ENCODE measurements at regions of chr17 and their contacts with region 1.

Region 1: DNA sequence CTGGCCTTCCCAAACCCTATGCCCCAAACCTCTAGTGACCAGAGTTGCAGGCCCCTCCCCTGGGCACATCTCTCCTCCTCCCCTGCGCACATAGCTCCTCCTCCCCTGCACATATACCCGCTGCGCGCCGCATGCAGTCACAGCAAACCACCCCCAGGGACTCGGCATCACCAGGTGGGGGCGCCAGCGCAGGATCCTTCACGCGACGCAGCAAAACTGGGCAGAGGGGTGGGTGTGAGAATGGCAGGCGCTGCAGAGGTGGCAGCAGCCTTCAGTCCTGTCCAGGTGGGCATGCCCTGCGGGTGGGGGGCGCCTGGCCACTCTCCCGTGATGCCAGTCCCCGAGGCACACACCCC is 5.6 kb downstream of the CORO6 start:
- DNase-seq: peak; percentile 93
- H3K4me3 Mint-ChIP-seq: peak overlapping the region; percentile 82
- H3K27ac Mint-ChIP-seq: peak overlapping the region; percentile 92
- H3K4me1 Mint-ChIP-seq: peaks cover 51% of the 10 kb centered on the region
- H3K27me3 Mint-ChIP-seq: peaks cover 8% of the 10 kb centered on the region

Region 2: DNA sequence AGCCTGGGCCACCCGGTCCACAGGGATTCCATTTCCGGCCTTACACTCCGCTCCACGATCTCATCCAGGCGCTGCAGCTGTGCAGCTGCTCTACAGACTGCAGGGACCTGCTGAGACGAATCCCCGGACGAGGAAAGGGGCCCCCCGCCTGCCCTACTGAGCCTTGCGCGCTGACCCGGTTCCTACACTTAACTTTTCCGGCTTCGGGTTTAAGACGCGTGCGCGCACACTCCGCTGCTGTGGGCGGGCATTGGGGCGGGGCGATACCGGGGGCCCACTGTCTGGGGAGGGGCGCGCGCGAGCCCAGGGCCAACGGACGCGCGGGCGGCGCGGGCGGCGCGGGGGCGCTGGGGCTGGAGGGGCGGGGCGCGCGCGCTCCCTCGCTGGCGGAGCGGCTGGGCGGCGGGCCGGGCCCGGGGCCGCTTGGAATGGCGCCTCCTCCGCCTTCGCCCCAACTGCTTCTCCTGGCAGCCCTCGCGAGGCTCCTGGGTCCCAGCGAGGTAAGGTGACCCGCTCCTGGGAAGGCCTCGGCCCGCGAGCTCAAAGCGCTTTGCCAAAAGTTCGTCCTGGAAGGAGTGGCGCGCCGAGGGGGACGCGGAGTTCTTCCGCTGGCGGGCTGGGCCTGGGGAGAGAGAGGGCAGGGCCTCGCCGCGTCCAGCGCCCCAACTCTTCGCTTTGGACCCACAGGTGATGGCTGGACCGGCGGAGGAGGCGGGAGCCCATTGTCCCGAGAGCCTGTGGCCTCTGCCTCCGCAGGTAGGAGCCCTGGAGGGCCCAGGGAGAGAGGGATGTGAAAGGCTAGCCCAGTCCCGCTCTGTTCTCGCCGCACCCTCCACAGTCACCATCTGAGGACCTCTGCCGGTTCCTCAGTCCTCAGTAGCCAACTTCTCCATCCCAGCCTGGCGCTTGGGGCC is 48.5 kb before region 1 on chr17 and contains the start of gene TP53I13:
- CTCF ChIA-PET with region 1: interaction called, 37 read pairs
- POLR2A ChIA-PET with region 1: interaction called, 3 read pairs
- DNase-seq: peak; percentile 91
- H3K4me3 Mint-ChIP-seq: peak within 1 kb of the TSS; percentile 95
- H3K27ac Mint-ChIP-seq: peak within 1 kb of the TSS; percentile 97
- H3K4me1 Mint-ChIP-seq: peaks cover 33% of the 10 kb centered on the region
- H3K27me3 Mint-ChIP-seq: no peaks in the 10 kb centered on the region
- total RNA-seq, gene TP53I13: 71.4 to 75.0 TPM

Region 3: DNA sequence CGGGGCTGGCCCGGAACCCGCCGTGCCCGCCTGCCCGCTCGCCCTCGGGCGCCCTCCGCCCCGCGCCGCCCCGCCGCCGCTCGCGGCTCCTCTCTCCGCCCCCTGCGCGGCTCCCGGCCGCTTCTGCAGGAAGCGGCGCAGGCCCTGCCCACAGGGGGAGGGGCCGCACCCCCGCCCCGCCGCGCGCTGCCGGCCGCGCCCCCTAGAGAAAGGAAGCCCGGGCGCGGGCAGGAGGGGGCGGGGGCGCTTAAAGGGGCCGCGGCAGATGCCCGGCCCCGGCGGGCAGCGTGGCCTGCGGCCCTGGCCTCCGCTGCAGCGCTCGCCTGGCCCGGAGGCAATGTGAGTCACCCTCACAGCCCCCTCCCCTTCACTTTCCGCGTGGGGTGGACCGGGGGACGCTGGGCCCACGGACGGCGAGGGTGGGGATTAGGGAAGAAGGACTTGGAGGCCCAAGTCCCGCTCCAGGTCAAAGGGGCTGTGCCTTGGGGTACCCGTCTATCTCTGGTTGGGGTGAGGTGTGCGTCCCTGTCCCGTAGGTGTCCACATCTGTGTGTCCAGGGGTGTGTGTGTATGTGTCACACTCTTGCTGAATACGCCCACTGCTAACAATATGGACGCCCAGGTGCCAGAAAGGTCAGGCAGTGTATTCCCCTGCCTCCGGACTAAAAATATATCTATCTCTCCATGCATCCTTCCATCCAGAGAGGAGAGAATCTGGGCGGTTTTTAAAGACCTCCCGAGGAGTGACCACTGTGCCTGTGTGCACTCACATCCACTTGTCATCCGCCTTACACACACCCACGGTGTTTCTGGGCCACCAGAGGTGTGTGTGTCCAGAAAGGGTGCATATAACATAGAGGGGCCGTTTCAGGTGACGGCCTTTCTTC is 27.3 kb before region 1 on chr17 and contains the start of gene GIT1:
- CTCF ChIA-PET with region 1: interaction called, 116 read pairs
- POLR2A ChIA-PET with region 1: interaction called, 5 read pairs
- DNase-seq: peak; percentile 86
- H3K4me3 Mint-ChIP-seq: peak within 1 kb of the TSS; percentile 98
- H3K27ac Mint-ChIP-seq: peak within 1 kb of the TSS; percentile 93
- H3K4me1 Mint-ChIP-seq: peaks cover 73% of the 10 kb centered on the region
- H3K27me3 Mint-ChIP-seq: no peaks in the 10 kb centered on the region
- total RNA-seq, gene GIT1: 107 TPM

Region 4: GRCh38 chr17:29603109-29603674 is 13.9 kb before region 1 on chr17:
- CTCF ChIA-PET with region 1: interaction called, 18 read pairs
- POLR2A ChIA-PET with region 1: no interaction called
- DNase-seq: no peak
- H3K4me3 Mint-ChIP-seq: no peak overlapping the region
- H3K27ac Mint-ChIP-seq: no peak overlapping the region
- H3K4me1 Mint-ChIP-seq: no peaks in the 10 kb centered on the region
- H3K27me3 Mint-ChIP-seq: no peaks in the 10 kb centered on the region

Region 5: DNA sequence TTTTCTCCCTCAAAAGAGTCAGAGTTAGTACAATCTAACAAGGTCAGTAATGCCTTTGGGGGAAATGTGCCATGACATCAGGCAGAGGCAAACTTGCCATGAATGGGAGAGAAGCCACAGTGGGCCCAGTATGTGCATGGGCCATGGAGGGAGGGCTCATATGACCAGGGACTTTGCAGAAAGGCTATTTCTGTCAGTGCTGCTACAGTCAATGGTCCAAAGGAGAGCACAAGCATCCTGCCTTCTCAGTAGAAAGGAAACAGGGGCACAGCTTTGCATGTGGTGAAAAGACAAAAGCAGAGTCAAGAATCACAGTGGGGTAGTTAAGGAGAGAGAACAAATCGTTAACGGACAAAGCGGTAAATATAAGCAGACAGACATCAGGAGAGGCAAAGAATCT is 16.8 kb after region 1 on chr17:
- CTCF ChIA-PET with region 1: interaction called, 33 read pairs
- POLR2A ChIA-PET with region 1: no interaction called
- DNase-seq: no peak
- H3K4me3 Mint-ChIP-seq: no peak overlapping the region
- H3K27ac Mint-ChIP-seq: peak overlapping the region; percentile 7
- H3K4me1 Mint-ChIP-seq: peaks cover 21% of the 10 kb centered on the region
- H3K27me3 Mint-ChIP-seq: no peaks in the 10 kb centered on the region

Region 6: GRCh38 chr17:29760761-29761696 is 143.9 kb after region 1 on chr17:
- CTCF ChIA-PET with region 1: interaction called, 12 read pairs
- POLR2A ChIA-PET with region 1: no interaction called
- DNase-seq: peak; percentile 93
- H3K4me3 Mint-ChIP-seq: peak overlapping the region; percentile 82
- H3K27ac Mint-ChIP-seq: peak overlapping the region; percentile 97
- H3K4me1 Mint-ChIP-seq: peaks cover 38% of the 10 kb centered on the region
- H3K27me3 Mint-ChIP-seq: no peaks in the 10 kb centered on the region

Region 7: DNA sequence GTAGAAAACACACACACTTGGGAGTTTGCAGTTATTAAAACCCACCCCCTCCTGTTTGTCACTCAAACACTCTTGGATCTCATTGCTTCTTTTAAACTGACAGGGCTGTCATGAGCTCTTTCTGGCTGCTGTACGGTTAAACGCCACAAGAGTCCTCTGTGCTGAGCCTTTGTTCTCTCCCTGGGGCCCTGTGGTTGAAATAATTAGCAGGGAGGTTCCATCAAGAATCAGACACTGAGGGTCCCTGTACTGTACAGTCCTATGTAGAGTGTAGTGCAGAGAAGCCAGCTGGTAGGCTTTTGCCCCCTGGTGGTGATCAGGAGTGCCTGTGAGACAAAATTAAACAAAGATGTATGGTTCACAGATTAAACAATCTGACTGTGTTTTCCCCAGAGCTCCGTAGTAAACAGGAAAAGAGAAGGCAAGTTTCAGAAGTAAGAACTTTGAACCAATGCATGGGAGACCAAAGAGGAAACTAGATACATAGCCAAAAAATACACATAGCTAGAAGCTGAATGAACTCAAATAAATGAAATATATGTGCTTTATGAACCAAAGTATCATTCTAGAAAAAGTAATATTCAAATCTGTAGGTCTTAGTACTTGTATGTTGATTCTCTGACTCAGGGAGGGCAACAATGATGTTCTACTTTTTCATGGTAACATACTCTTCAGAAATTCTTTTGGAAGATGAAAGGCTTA is 314.3 kb after region 1 on chr17:
- CTCF ChIA-PET with region 1: interaction called, 23 read pairs
- POLR2A ChIA-PET with region 1: interaction called, 3 read pairs
- DNase-seq: peak; percentile 82
- H3K4me3 Mint-ChIP-seq: no peak overlapping the region
- H3K27ac Mint-ChIP-seq: no peak overlapping the region
- H3K4me1 Mint-ChIP-seq: peaks cover 24% of the 10 kb centered on the region
- H3K27me3 Mint-ChIP-seq: no peaks in the 10 kb centered on the region

Measured in activated CD4-positive, alpha-beta T cell treated with anti-CD3 and anti-CD28 coated beads, Interleukin-2, amount 10 ng/mL, durations not matched to agents 7 days and 5 days (primary cell).